ENCODE measurements at regions of chr19 and their contacts with region 1.

Region 1: DNA sequence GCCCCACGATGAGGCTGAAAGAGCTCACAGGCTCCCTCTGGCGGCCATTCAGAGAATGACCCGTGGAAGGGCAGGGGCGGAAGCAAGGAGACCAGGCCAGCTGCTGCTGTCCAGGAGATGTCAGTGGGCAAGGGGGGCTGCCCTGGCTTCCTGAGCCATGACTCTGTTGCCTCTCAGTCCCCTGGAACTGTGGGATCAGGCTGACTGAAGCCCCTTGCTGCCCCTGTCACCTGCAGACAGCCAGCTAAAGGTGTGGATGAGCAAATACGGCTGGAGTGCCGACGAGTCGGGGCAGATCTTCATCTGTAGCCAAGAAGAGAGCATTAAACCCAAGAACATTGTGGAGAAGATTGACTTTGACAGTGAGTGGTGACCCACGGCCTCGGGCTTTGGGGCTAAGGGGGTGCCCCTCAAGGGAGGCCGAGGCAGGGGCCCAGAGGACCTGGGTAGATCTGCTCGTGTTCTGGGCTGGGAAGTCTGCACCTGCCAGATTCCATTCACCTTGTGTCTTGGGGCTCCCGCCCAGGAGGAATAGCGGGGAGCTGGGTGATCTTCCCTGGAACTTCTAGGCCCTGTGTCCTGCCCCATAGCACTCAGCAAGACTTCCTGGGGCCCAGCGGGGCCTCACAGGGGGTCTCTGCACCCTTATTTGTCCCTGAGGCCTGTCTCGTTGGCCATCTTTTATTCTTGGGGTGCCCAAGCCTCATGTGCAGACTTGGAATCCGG is 12.5 kb upstream of the ACTN4 start:
- DNase-seq: peak; percentile 38
- H3K4me3 ChIP-seq: no peak overlapping the region
- H3K27ac ChIP-seq: peak overlapping the region; percentile 31
- H3K27me3 ChIP-seq: no peaks in the 10 kb centered on the region
- CTCF ChIP-seq: peak; percentile 94

Region 2: DNA sequence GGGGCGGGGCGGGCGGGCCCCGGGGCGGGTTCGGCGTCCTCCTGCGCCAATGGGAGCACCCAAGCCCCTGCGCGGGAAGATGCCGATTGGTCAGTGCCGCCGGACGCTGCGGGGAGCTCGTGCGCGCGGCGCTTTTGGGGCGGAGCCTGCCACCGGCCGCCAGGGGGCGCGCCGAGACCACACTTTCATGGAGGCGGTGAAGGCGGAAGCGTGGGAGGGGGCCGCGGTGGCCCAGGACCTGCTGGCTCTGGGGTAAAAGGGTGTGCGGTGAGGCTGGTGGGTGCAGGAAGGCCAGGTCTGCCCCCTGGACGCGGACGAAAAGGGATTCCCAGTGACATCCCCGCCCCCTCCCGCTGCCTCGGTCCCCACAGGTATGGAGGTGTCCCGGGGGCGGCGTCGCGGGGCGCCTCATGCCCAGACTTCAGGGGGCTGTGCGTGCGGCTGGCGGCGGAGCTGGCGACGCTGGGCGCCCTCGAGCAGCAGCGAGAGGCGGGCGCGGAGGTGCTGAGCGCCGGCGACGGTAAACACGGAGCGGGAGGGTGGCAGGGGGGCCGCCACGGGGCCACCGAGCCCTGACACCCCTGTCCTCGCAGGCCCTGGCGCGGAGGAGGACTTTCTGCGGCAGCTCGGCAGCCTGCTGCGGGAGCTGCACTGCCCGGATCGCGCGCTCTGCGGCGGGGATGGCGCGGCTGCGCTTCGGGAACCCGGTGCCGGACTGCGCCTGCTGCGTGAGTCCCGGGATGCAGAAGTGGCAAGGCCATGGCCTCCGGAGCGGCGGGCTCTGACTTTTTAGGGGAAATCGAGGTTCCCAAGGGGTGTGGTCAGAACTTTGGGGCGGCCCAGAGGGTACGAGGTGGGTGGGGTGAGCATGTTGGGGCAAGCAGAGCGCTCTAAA is 231.7 kb before region 1 on chr19 and contains the start of gene FAM98C:
- CTCF ChIA-PET with region 1: interaction called, 67 read pairs
- POLR2A ChIA-PET with region 1: no interaction called
- DNase-seq: peak; percentile 85
- H3K4me3 ChIP-seq: peak within 1 kb of the TSS; percentile 94
- H3K27ac ChIP-seq: no peak within 1 kb of the TSS
- H3K27me3 ChIP-seq: no peaks in the 10 kb centered on the region
- CTCF ChIP-seq: peak; percentile 75
- polyA plus RNA-seq, gene FAM98C: 5.0 and 7.9 TPM in 2 replicates

Region 3: GRCh38 chr19:38544034-38544958 is 90.6 kb before region 1 on chr19:
- CTCF ChIA-PET with region 1: interaction called, 15 read pairs
- POLR2A ChIA-PET with region 1: no interaction called
- DNase-seq: peak; percentile 24
- H3K4me3 ChIP-seq: no peak overlapping the region
- H3K27ac ChIP-seq: no peak overlapping the region
- H3K27me3 ChIP-seq: peaks cover 3% of the 10 kb centered on the region
- CTCF ChIP-seq: peak; percentile 62

Region 4: DNA sequence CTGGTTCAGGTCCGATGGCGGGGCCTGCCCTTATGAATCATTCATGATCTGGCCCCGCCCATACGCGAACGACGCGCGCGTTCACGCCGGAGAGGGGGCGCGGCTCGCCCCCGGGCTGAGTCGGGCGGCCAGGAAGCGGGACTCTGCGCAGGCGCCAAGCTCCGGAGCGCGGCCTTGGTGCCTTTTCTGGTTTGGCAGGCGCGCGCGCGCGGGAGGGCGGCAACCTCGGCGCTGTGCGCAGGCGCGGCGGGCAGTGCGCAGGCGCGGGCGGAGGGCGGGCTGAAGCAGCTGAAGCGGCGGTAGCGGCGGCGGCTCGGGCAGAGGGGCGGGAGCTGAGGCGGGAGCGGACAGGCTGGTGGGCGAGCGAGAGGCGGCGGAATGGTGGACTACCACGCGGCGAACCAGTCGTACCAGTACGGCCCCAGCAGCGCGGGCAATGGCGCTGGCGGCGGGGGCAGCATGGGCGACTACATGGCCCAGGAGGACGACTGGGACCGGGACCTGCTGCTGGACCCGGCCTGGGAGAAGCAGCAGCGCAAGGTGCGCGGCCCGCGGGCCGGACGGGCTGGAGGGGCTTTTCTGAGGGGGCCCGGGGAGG is 12.5 kb after region 1 on chr19 and contains the start of gene ACTN4:
- CTCF ChIA-PET with region 1: interaction called, 12 read pairs
- POLR2A ChIA-PET with region 1: interaction called, 5 read pairs
- DNase-seq: peak; percentile 87
- H3K4me3 ChIP-seq: peak within 1 kb of the TSS; percentile 89
- H3K27ac ChIP-seq: peak within 1 kb of the TSS; percentile 47
- H3K27me3 ChIP-seq: no peaks in the 10 kb centered on the region
- CTCF ChIP-seq: no peak
- polyA plus RNA-seq, gene ACTN4: 300 and 359 TPM in 2 replicates

Region 5: DNA sequence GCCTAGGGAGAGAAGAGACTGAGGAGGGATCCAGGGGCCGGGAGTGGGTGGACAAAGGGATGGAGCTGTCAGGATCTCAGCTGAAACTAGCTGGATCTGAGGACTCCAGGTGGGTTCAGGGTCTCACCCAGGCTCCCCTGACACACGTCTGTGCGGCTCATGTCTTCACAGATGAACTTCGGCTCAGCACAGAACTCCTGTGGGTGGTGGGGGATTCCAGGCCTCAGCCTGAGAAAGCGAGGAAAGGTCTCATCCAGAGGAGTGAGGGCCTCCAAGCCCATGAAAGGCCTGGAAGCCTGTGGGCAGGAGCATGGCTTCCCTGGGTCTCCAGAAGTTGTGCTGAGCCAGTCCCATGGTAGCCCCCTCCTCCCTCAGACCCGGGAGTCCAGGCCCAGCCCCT is 108.0 kb after region 1 on chr19:
- CTCF ChIA-PET with region 1: no interaction called
- POLR2A ChIA-PET with region 1: no interaction called
- DNase-seq: no peak
- H3K4me3 ChIP-seq: no peak overlapping the region
- H3K27ac ChIP-seq: no peak overlapping the region
- H3K27me3 ChIP-seq: peaks cover 3% of the 10 kb centered on the region
- CTCF ChIP-seq: no peak

Region 6: GRCh38 chr19:38929929-38930775 is 295.2 kb after region 1 on chr19 and contains the start of gene SARS2:
- CTCF ChIA-PET with region 1: interaction called, 18 read pairs
- POLR2A ChIA-PET with region 1: interaction called, 8 read pairs
- DNase-seq: peak; percentile 90
- H3K4me3 ChIP-seq: peak within 1 kb of the TSS; percentile 99
- H3K27ac ChIP-seq: peak within 1 kb of the TSS; percentile 86
- H3K27me3 ChIP-seq: no peaks in the 10 kb centered on the region
- CTCF ChIP-seq: peak; percentile 98
- polyA plus RNA-seq, gene SARS2: 10.1 and 16.2 TPM in 2 replicates